CD8-positive, alpha-beta memory T cell (primary cell): ENCODE measurements at regions of chr4 and their contacts with region 1.

Region 1: DNA sequence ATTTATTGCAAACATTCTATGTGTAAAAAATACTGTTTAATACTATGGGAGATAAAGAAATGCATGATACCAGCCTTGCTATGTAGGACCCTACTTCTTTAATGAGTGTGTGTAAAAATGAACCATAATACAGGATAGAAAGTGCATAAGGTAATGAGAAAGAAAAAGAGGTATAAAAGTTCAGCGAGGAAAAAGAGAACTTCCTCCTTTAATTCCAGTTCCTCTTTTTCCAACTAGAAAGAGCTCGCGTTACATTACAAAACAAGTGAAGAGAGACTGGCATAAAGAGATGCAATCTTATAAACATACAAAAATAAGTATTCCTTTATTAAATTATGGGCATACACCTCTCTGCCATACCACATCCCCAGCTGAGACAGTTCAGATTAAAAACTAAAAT is 77.4 kb downstream of the ANKRD17 start:
- DNase-seq: no peak
- H3K4me3 ChIP-seq: no peak overlapping the region
- H3K4me3 Mint-ChIP-seq: no peak overlapping the region
- H3K27ac ChIP-seq: no peak overlapping the region
- H3K27ac Mint-ChIP-seq: peak overlapping the region in 1 of 8 donors; percentile 10
- H3K4me1 ChIP-seq: peaks cover 7% of the 10 kb centered on the region
- H3K4me1 Mint-ChIP-seq: peaks cover 40 to 61% (median 55%) of the 10 kb centered on the region in 3 donors
- H3K27me3 ChIP-seq: no peaks in the 10 kb centered on the region
- H3K27me3 Mint-ChIP-seq: no peaks in the 10 kb centered on the region

Region 2: GRCh38 chr4:73222466-73223257 is 41.4 kb after region 1 on chr4:
- CTCF ChIA-PET with region 1: no interaction called
- POLR2A ChIA-PET with region 1: interaction called, 18 read pairs
- DNase-seq: peak; percentile 10 to 81 (median 66)
- H3K4me3 ChIP-seq: peak overlapping the region; percentile 58
- H3K4me3 Mint-ChIP-seq: no peak overlapping the region
- H3K27ac ChIP-seq: peak overlapping the region; percentile 70
- H3K27ac Mint-ChIP-seq: no peak overlapping the region
- H3K4me1 ChIP-seq: peaks cover 24% of the 10 kb centered on the region
- H3K4me1 Mint-ChIP-seq: peaks cover 36 to 48% (median 38%) of the 10 kb centered on the region in 3 donors
- H3K27me3 ChIP-seq: no peaks in the 10 kb centered on the region
- H3K27me3 Mint-ChIP-seq: no peaks in the 10 kb centered on the region

Region 3: DNA sequence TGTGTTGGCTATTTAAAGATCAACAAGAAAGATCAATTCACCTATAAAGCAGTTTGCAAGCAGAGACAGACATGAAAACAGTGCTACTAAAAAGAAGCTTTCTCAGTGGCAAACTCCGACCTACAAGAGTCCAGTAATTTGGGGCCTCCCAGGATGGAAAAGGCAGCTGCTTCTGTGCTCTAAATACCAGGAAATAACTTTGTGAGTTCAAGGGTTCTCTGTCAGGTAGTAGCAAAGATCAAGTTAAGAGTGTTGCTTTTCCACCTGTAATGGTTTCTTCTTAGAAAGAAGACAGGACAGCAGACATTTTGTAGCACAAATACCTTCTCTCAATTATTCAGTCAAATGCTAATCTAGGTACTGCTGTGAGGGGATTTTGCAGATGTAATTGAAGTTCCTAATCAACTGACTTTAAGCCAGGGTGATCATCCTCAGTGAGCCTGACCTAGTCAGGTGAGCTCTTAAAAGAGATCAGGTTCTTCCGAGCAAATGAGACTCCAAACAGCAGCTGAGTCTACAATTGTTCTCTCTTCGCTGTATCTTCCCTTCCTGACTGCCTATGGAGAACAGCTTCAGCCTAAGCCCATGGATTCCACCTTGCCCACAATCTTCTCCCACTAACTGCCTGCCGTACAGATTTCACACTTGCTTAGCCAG is 63.8 kb after region 1 on chr4:
- CTCF ChIA-PET with region 1: no interaction called
- POLR2A ChIA-PET with region 1: no interaction called
- DNase-seq: no peak
- H3K4me3 ChIP-seq: no peak overlapping the region
- H3K4me3 Mint-ChIP-seq: peak overlapping the region in 3 of 7 donors; percentile 2 to 62 (median 13)
- H3K27ac ChIP-seq: no peak overlapping the region
- H3K27ac Mint-ChIP-seq: peak overlapping the region in 5 of 8 donors; percentile 10 to 77 (median 39)
- H3K4me1 ChIP-seq: peaks cover 36% of the 10 kb centered on the region
- H3K4me1 Mint-ChIP-seq: peaks cover 61 to 83% (median 80%) of the 10 kb centered on the region in 3 donors
- H3K27me3 ChIP-seq: no peaks in the 10 kb centered on the region
- H3K27me3 Mint-ChIP-seq: no peaks in the 10 kb centered on the region

Region 4: GRCh38 chr4:73406548-73406875 is 225.3 kb after region 1 on chr4:
- CTCF ChIA-PET with region 1: no interaction called
- POLR2A ChIA-PET with region 1: no interaction called
- DNase-seq: no peak
- H3K4me3 ChIP-seq: no peak overlapping the region
- H3K4me3 Mint-ChIP-seq: no peak overlapping the region
- H3K27ac ChIP-seq: no peak overlapping the region
- H3K27ac Mint-ChIP-seq: no peak overlapping the region
- H3K4me1 ChIP-seq: no peaks in the 10 kb centered on the region
- H3K4me1 Mint-ChIP-seq: no peaks in the 10 kb centered on the region
- H3K27me3 ChIP-seq: no peaks in the 10 kb centered on the region
- H3K27me3 Mint-ChIP-seq: no peaks in the 10 kb centered on the region